ENCODE measurements at regions of chr4 and their contacts with region 1.

Region 1: DNA sequence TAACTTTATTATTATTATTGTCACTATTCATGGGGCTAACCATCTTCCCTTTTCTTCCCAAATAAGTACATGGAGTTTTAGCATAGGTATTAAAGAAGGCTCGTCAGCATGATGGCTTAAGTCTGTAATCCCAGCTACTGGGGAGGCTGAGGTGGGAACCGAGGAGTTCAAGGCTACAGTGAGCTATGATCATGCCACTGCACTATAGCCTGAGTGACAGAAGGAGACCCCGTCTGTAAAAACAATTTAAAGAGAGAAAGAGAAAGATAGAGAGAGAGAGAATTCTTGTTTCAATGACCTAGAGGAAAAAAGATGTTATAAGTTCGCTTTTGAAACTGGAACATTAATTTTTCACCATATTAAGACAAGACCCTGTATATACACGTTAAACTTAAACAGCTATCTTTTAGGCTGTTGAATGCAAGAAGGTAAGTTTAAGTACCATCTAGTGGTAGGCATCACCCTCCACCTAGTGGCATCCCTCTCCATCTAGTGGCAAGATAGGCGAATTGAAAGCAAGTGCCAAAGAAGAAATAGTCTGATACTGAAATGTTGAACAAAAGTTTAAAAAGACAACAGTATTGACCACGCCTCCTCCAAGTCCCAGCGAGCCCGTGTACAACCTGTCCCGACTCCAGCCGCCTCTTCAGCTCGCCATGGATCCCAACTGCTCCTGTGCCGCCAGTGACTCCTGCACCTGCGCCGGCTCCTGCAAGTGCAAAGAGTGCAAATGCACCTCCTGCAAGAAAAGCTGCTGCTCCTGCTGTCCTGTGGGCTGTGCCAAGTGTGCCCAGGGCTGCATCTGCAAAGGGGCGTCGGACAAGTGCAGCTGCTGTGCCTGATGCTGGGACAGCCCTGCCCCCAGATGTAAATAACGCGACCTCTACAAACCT is 26.0 kb upstream of the YTHDC1 start:
- DNase-seq: peak; percentile 66
- H3K4me3 ChIP-seq: no peak overlapping the region
- H3K27ac ChIP-seq: no peak overlapping the region
- H3K4me1 ChIP-seq: no peaks in the 10 kb centered on the region
- H3K27me3 ChIP-seq: no peaks in the 10 kb centered on the region
- CTCF ChIP-seq: peak in 3 of 4 experiments; percentile 78 to 91 (median 91)
- POLR2A ChIP-seq: no peak

Region 2: GRCh38 chr4:68271851-68272756 is 103.8 kb before region 1 on chr4:
- intact Hi-C with region 1: loop called (anchors 5 kb)
- DNase-seq: peak; percentile 12
- H3K4me3 ChIP-seq: no peak overlapping the region
- H3K27ac ChIP-seq: no peak overlapping the region
- H3K4me1 ChIP-seq: no peaks in the 10 kb centered on the region
- H3K27me3 ChIP-seq: no peaks in the 10 kb centered on the region
- CTCF ChIP-seq: peak; percentile 49 to 87 (median 84)
- POLR2A ChIP-seq: no peak

Measured in prostate gland (tissue), 2 donors.